ENCODE measurements at regions of chr17 and their contacts with region 1.

Region 1: GRCh38 chr17:30236766-30237165 is 1.3 kb upstream of the SLC6A4 start:
- DNase-seq: peak; percentile 65
- H3K4me3 Mint-ChIP-seq: peak overlapping the region; percentile 59
- H3K27ac Mint-ChIP-seq: no peak overlapping the region
- H3K4me1 Mint-ChIP-seq: peaks cover 20% of the 10 kb centered on the region
- H3K27me3 Mint-ChIP-seq: peaks cover 71% of the 10 kb centered on the region

Region 2: GRCh38 chr17:30104575-30105339 is 132.0 kb before region 1 on chr17:
- intact Hi-C with region 1: loop called (anchors 10 kb)
- DNase-seq: peak; percentile 91
- H3K4me3 Mint-ChIP-seq: peak overlapping the region; percentile 81
- H3K27ac Mint-ChIP-seq: no peak overlapping the region
- H3K4me1 Mint-ChIP-seq: peaks cover 5% of the 10 kb centered on the region
- H3K27me3 Mint-ChIP-seq: peaks cover 16% of the 10 kb centered on the region

Region 3: GRCh38 chr17:30116661-30117551 is 119.9 kb before region 1 on chr17 and contains the start of gene NSRP1:
- intact Hi-C with region 1: no loop called
- DNase-seq: peak; percentile 98
- H3K4me3 Mint-ChIP-seq: peak within 1 kb of the TSS; percentile 96
- H3K27ac Mint-ChIP-seq: peak within 1 kb of the TSS; percentile 96
- H3K4me1 Mint-ChIP-seq: peaks cover 45% of the 10 kb centered on the region
- H3K27me3 Mint-ChIP-seq: no peaks in the 10 kb centered on the region
- total RNA-seq, gene NSRP1: 29.8 and 31.7 TPM in 2 replicates

Region 4: GRCh38 chr17:30148376-30148775 is 88.4 kb before region 1 on chr17:
- intact Hi-C with region 1: no loop called
- DNase-seq: no peak
- H3K4me3 Mint-ChIP-seq: no peak overlapping the region
- H3K27ac Mint-ChIP-seq: no peak overlapping the region
- H3K4me1 Mint-ChIP-seq: peaks cover 2% of the 10 kb centered on the region
- H3K27me3 Mint-ChIP-seq: no peaks in the 10 kb centered on the region